OCI-LY7 (cell line): ENCODE measurements at regions of chr10 and their contacts with region 1.

Region 1: DNA sequence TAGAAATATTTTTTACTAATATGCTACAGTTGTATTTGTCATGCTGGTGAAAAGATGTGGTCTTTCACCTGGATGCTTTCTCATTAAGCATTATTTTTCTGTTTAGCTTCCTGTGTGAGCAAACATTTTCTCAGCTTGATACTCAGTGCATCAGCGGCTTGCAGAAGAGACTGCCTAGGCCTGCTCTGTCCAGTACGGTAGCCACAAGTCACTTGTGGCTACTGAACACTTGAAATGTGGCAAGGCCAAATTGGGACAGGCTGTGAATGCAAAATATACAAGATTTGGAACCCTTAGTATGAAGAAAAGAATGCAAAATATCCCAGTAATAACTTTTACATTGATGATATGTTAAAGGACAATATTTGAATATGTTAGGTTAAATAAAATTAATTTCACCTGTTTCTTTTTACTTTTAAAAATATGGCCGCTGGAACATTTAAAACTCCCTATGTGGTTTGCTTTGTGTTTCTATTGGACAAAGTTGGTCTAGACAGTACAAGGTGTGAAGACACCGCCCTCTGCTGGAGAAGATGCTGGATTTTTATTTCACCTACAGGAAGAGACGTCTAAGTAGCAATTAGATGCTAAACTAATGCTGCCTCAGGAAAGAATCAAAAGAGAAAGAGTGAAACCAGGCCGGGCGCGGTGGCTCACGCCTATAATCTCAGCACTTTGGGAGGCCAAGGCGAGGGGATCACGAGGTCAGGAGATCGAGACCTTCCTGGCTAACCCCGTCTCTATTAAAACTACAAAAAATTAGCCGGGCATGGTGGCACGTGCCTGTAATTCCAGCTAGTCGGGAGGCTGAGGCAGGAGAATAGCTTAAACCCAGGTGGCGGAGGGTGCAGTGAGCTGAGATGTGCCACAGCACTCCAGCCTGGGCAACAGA is 5.3 kb downstream of the SRGN start:
- DNase-seq: peak; percentile 85
- H3K4me3 ChIP-seq: no peak overlapping the region
- H3K27ac ChIP-seq: no peak overlapping the region
- H3K4me1 ChIP-seq: peaks cover 17% of the 10 kb centered on the region
- CTCF ChIP-seq: peak; percentile 89

Region 2: GRCh38 chr10:68988530-68989316 is 104.5 kb before region 1 on chr10 and contains the start of gene KIFBP:
- CTCF ChIA-PET with region 1: no interaction called
- POLR2A ChIA-PET with region 1: no interaction called
- intact Hi-C with region 1: loop called (anchors 5 kb)
- DNase-seq: peak; percentile 94
- H3K4me3 ChIP-seq: peak within 1 kb of the TSS; percentile 86
- H3K27ac ChIP-seq: peak within 1 kb of the TSS; percentile 43
- H3K4me1 ChIP-seq: peaks cover 21% of the 10 kb centered on the region
- CTCF ChIP-seq: peak; percentile 69
- total RNA-seq, gene KIFBP: 11.9 and 12.6 TPM in 2 replicates

Region 3: DNA sequence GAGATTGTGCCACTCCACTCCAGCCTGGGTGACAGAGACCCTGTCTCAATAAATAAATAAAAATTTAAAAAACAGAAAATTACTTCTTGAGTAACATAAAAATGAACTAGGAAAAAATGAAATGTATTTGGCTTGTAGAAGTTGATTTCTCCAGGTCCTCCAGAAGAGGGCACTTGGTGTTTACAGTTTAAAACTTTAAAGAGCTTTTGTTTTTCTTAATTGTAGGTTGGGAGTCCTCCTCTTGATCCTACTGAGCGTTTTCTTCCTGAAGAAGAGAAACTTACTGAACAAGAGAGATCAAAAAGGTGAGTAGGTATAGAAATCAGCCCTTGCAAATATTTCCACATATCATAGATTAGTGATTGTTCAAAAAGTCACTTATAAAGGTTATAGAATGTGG is 88.4 kb before region 1 on chr10:
- CTCF ChIA-PET with region 1: no interaction called
- POLR2A ChIA-PET with region 1: interaction called, 5 read pairs
- intact Hi-C with region 1: loop called (anchors 1 kb)
- DNase-seq: peak; percentile 49
- H3K4me3 ChIP-seq: no peak overlapping the region
- H3K27ac ChIP-seq: no peak overlapping the region
- H3K4me1 ChIP-seq: no peaks in the 10 kb centered on the region
- CTCF ChIP-seq: peak; percentile 76

Region 4: GRCh38 chr10:69222157-69223027 is 129.2 kb after region 1 on chr10:
- CTCF ChIA-PET with region 1: no interaction called
- POLR2A ChIA-PET with region 1: no interaction called
- intact Hi-C with region 1: loop called (anchors 5 kb)
- DNase-seq: peak; percentile 96
- H3K4me3 ChIP-seq: peak overlapping the region; percentile 45
- H3K27ac ChIP-seq: peak overlapping the region; percentile 74
- H3K4me1 ChIP-seq: peaks cover 36% of the 10 kb centered on the region
- CTCF ChIP-seq: peak; percentile 96